ENCODE measurements at regions of chr3 and their contacts with region 1.

Region 1: GRCh38 chr3:42012935-42013690 is 51.2 kb upstream of the ULK4 start:
- DNase-seq: peak; percentile 85
- ATAC-seq: peak; percentile 84

Region 2: DNA sequence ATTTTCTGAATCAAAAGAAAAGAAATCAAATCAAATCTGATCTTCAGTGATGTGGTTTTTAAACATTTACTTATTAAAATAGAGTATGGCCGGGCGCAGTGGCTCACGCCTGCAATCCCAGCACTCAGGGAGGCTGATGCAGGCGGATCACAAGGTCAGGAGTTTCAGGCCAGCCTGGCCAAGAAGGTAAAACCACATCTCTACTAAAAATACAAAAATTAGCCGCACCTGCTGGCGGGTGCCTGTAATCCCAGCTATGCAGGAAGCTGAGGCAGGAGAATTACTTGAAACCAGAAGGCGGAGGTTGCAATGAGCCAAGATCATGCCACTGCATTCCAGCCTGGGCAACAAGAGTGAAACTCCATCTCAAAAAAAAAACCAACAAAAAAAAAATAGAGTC is 220.3 kb before region 1 on chr3:
- intact Hi-C with region 1: no loop called
- DNase-seq: no peak
- ATAC-seq: no peak

Region 3: GRCh38 chr3:41961750-41962679 is 51.1 kb before region 1 on chr3 and contains the start of gene ULK4:
- intact Hi-C with region 1: loop called (anchors 5 kb)
- DNase-seq: peak; percentile 97
- ATAC-seq: peak; percentile 99
- total RNA-seq, gene ULK4: 3.7 TPM

Region 4: DNA sequence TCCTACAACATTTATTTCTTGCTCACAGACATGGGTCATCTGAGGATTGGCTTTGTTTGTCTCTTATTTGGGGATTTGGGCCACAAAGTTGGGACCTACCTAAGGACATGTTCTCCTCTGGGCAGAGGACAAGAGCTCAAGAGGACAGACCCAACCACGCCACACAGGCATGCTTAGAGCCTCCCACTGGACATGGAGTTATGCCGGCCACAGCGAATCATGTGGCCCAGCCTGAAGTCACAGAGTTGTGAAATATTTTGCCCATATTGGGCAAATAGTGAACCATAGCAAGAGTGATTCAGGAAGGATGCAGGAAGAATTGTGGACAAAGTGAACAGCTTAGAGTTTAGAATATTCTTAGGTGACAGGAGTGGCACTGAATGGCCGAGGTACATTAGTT is 87.9 kb after region 1 on chr3:
- intact Hi-C with region 1: loop called (anchors 2 kb)
- DNase-seq: peak; percentile 69
- ATAC-seq: peak; percentile 75

Region 5: DNA sequence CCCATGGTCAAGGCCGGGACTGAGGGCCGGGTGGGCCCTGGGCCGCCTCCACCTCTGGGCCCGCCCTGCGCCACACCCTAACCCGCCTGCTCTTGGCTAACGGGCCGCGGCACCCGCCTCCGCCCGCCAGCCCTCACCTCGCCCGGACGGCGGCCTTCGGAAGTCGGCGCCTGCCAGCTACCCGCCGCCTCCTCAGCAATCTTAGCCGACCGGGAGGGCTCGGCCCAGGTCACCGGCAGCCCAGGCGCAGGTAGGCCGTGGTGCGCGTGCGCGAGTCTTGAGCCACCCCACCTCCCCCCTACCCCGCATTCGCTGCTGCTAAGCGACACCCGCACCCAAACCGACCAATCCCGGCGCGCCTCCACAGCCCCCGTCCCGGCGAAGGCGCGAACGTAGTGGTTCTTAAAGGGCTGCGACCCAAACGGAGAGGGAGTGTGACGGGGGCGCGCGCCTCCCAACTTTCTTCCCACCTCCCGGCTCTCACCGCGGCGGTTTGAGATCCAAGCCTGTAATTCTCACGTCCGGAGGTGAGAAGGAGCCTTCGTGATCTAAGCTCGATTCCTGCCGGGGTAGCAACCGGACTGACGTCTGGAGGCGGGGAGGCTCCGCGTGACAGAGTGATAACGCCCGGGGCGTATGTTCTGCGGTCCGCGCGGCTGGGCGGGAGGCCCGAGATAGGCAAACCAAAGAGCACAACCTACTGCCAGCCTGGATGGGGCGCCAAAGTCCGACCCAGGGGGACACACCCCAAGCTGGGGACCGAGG is 568.8 kb after region 1 on chr3 and contains the start of gene SEC22C:
- intact Hi-C with region 1: no loop called
- DNase-seq: peak; percentile 96
- ATAC-seq: peak; percentile 99
- total RNA-seq, gene SEC22C: 21.6 TPM

Measured in Right ventricle myocardium superior (tissue), 1 donor.